GM12878 (cell line): ENCODE measurements at regions of chr3 and their contacts with region 1.

Region 1: DNA sequence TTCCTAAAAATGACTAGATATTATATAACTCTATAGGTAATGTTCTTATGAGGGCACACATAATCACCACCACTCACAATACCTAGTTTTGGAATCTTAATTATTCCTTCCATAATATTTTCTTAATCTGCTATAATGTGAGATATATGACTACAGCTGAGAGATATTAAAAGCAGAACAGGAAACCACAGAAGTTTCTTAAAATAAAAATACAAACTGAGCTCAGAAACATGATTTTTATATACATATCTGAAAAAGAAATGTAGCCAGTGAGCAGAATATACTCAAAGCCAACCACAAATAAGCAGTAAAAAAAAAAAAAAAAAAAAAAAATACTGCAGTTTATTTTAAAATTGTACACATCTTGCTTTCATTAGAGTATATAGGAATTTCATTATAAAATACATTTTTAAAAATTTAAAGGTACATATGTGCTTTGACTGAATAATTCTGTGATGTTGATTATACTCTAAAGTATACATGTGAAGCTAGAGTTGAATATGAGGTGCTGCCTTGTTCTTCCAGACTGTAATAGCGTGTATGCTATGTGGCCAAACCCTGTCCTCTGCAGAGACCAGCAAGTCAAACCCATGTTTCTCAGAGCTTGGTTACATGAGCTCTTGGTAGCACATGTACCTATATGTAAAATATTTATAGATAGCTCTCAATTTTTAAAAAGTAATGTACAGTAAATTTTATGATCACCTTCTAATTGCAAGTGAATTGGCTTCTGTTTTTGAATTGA is 175.0 kb downstream of the UBE2E2 start:
- DNase-seq: no peak
- ATAC-seq: peak; percentile 54
- H3K4me3 ChIP-seq: no peak overlapping the region
- H3K27ac ChIP-seq: no peak overlapping the region
- H3K4me1 ChIP-seq: peaks cover 16% of the 10 kb centered on the region
- H3K27me3 ChIP-seq: no peaks in the 10 kb centered on the region
- CTCF ChIP-seq: no peak
- EP300 ChIP-seq: no peak
- POLR2A ChIP-seq: no peak
- RAD21 ChIP-seq: no peak

Region 2: GRCh38 chr3:23294770-23295387 is 83.2 kb before region 1 on chr3:
- CTCF ChIA-PET with region 1: no interaction called
- POLR2A ChIA-PET with region 1: no interaction called
- RAD21 ChIA-PET with region 1: no interaction called
- SMC1A ChIA-PET with region 1: no interaction called
- in situ Hi-C with region 1: no loop called
- intact Hi-C with region 1: no loop called
- DNase-seq: no peak
- ATAC-seq: peak; percentile 76
- H3K4me3 ChIP-seq: 0 out of 2 replicates have a peak overlapping the region, but pooled peaks have one; percentile 2
- H3K27ac ChIP-seq: no peak overlapping the region; the same call in 1 of the 2 replicates
- H3K4me1 ChIP-seq: peaks cover 9% of the 10 kb centered on the region; the same call in 1 of the 2 replicates
- H3K27me3 ChIP-seq: no peaks in the 10 kb centered on the region
- CTCF ChIP-seq: no peak
- EP300 ChIP-seq: no peak
- POLR2A ChIP-seq: no peak
- RAD21 ChIP-seq: 0 out of 2 replicates have a peak, but pooled peaks have one; percentile 0

Region 3: DNA sequence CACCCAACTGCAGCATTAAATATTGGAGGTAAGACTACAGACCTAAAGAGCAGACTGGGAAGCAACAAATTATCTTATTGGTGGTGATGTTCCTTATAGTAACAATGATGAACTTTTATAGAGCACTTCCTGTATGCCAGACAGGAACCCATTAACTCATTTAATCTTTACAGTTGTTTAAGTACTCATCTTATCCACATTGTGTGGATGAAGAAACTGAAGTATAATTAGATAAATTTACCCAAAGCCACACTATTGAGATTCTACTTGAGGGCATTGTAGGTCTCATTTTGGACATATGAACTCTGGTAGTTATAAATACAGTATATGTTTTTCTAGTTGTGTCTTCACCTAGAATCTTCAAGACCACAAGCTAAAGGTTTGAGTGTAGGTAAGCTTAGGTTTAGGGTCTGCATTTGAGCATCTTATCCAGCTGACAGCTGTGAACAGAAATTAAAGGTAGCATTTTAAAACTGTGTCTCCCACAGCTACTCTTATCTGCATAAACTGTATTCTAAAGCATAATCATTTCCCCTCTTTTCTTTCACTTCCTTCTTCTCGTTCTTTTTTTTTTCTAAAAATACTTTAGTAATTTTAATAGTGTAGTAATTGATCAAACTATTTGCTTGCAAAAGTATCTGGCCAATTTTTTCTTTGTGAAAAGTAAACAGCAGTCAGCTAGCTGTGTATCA is 36.8 kb before region 1 on chr3:
- CTCF ChIA-PET with region 1: no interaction called
- POLR2A ChIA-PET with region 1: interaction called, 3 read pairs
- RAD21 ChIA-PET with region 1: interaction called, 10 read pairs
- SMC1A ChIA-PET with region 1: interaction called, 3 read pairs
- in situ Hi-C with region 1: no loop called
- intact Hi-C with region 1: no loop called
- DNase-seq: peak; percentile 8
- ATAC-seq: peak; percentile 81
- H3K4me3 ChIP-seq: peak overlapping the region; percentile 13; the same call in 1 of the 2 replicates
- H3K27ac ChIP-seq: peak overlapping the region; percentile 46
- H3K4me1 ChIP-seq: peaks cover 22% of the 10 kb centered on the region
- H3K27me3 ChIP-seq: no peaks in the 10 kb centered on the region
- CTCF ChIP-seq: no peak
- EP300 ChIP-seq: no peak
- POLR2A ChIP-seq: no peak
- RAD21 ChIP-seq: no peak

Region 4: DNA sequence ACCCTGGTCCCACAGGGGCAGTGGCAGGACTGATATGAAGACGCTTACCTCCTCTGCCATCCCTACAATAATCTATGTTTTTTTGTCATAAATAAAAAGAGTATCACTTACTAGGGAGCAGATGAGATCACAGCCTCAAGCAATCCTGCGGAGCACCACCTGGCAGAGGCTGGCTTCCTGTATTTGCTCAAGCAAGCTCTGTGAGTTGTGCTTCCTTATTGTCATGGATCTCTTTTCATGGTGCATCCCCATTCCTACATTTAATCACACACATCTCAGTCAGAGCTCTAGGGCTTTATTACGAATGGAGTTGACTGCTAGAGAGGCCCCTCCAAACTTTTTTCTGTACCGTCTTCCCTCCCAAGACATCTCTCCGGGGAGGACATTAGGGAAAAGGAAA is 11.0 kb after region 1 on chr3:
- CTCF ChIA-PET with region 1: interaction called, 4 read pairs
- POLR2A ChIA-PET with region 1: no interaction called
- RAD21 ChIA-PET with region 1: interaction called, 3 read pairs
- SMC1A ChIA-PET with region 1: interaction called, 19 read pairs
- in situ Hi-C with region 1: no loop called
- intact Hi-C with region 1: no loop called
- DNase-seq: no peak
- ATAC-seq: no peak
- H3K4me3 ChIP-seq: no peak overlapping the region
- H3K27ac ChIP-seq: no peak overlapping the region
- H3K4me1 ChIP-seq: peaks cover 13% of the 10 kb centered on the region
- H3K27me3 ChIP-seq: no peaks in the 10 kb centered on the region
- CTCF ChIP-seq: no peak
- EP300 ChIP-seq: no peak
- POLR2A ChIP-seq: no peak
- RAD21 ChIP-seq: no peak

Region 5: DNA sequence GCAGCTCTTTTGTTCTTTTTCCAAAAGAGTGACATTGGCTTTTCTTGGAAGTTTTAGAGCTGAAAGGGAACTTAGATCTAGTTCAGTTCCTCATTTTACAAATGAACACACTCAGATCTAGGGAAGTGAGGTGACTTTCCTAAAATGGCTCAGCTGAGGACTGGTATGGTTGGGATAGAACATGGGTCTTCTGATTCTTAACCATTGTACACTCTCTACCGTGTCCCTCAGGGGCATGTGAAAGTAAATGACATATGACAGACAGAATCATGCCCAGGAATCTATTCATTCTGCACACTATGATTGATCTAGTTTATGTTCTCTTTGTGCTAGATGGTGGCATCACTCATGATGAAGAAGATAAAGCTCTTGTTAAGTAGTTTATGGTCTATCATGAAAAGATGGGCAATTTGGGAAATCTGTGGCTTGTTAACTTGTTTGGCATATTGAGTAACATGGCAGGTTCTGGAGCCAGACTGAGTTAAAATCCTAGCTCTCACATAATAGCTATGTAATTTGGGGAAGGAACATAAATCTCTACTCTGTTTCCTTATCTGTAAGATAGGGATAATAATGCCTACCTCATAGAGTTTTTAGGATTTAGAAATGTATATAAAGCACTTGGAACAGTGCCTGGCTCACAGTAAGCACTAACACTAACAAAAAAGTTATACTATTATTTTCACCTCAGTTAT is 458.6 kb after region 1 on chr3:
- CTCF ChIA-PET with region 1: no interaction called
- POLR2A ChIA-PET with region 1: no interaction called
- RAD21 ChIA-PET with region 1: no interaction called
- SMC1A ChIA-PET with region 1: no interaction called
- in situ Hi-C with region 1: no loop called
- intact Hi-C with region 1: no loop called
- DNase-seq: no peak
- ATAC-seq: peak; percentile 65
- H3K4me3 ChIP-seq: no peak overlapping the region
- H3K27ac ChIP-seq: no peak overlapping the region
- H3K4me1 ChIP-seq: peaks cover 41% of the 10 kb centered on the region
- H3K27me3 ChIP-seq: no peaks in the 10 kb centered on the region
- CTCF ChIP-seq: no peak
- EP300 ChIP-seq: no peak
- POLR2A ChIP-seq: no peak
- RAD21 ChIP-seq: no peak